CD4-positive, alpha-beta T cell (primary cell): ENCODE measurements at regions of chr9 and their contacts with region 1.

Region 1: GRCh38 chr9:105127863-105128220 is 116.6 kb upstream of the SLC44A1 start:
- DNase-seq: peak; percentile 30 to 92 (median 46)
- ATAC-seq: peak; percentile 99
- H3K4me3 ChIP-seq: peak overlapping the region; percentile 3
- H3K4me3 Mint-ChIP-seq: peak overlapping the region; percentile 31
- H3K27ac ChIP-seq: no peak overlapping the region
- H3K27ac Mint-ChIP-seq: peak overlapping the region; percentile 73
- H3K4me1 ChIP-seq: peaks cover 55% of the 10 kb centered on the region
- H3K4me1 Mint-ChIP-seq: peaks cover 65% of the 10 kb centered on the region
- H3K27me3 ChIP-seq: no peaks in the 10 kb centered on the region
- H3K27me3 Mint-ChIP-seq: no peaks in the 10 kb centered on the region
- CTCF ChIP-seq: no peak

Region 2: GRCh38 chr9:104961238-104961637 is 166.6 kb before region 1 on chr9:
- CTCF ChIA-PET with region 1: no interaction called
- POLR2A ChIA-PET with region 1: interaction called, 4 read pairs
- intact Hi-C with region 1: loop called in 1 of 2 experiments (anchors 2 kb)
- DNase-seq: peak in 12 of 14 experiments; percentile 9 to 79 (median 42)
- ATAC-seq: peak; percentile 99
- H3K4me3 ChIP-seq: no peak overlapping the region
- H3K4me3 Mint-ChIP-seq: peak overlapping the region; percentile 6
- H3K27ac ChIP-seq: no peak overlapping the region
- H3K27ac Mint-ChIP-seq: peak overlapping the region; percentile 10
- H3K4me1 ChIP-seq: peaks cover 14% of the 10 kb centered on the region
- H3K4me1 Mint-ChIP-seq: peaks cover 32% of the 10 kb centered on the region
- H3K27me3 ChIP-seq: no peaks in the 10 kb centered on the region
- H3K27me3 Mint-ChIP-seq: no peaks in the 10 kb centered on the region
- CTCF ChIP-seq: no peak

Region 3: DNA sequence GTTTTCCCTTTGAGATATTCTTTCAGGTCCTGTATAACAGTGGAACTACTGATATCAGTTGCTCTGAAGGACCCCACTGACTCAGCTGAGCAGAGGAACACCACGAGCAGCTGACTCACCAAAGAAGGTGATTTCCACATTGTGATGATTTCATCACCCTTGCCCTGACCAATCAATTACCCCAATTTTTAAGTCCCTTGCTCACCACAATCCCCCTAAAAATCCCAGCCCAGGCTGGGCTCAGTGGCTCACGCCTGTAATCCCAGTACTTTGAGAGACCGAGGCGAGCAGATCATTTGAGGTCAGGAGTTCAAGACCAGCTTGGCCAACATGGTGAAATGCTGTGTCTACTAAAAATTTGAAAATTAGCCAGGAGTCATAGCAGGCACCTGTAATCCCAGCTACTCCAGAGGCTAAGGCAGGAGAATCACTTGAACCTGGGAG is 74.6 kb before region 1 on chr9:
- CTCF ChIA-PET with region 1: no interaction called
- POLR2A ChIA-PET with region 1: no interaction called
- intact Hi-C with region 1: loop called in 1 of 2 experiments (anchors 5 kb)
- DNase-seq: peak in 2 of 14 experiments; percentile 72 to 78
- ATAC-seq: peak; percentile 26
- H3K4me3 ChIP-seq: no peak overlapping the region
- H3K4me3 Mint-ChIP-seq: no peak overlapping the region
- H3K27ac ChIP-seq: no peak overlapping the region
- H3K27ac Mint-ChIP-seq: peak overlapping the region; percentile 8
- H3K4me1 ChIP-seq: peaks cover 17% of the 10 kb centered on the region
- H3K4me1 Mint-ChIP-seq: peaks cover 38% of the 10 kb centered on the region
- H3K27me3 ChIP-seq: no peaks in the 10 kb centered on the region
- H3K27me3 Mint-ChIP-seq: no peaks in the 10 kb centered on the region
- CTCF ChIP-seq: no peak

Region 4: GRCh38 chr9:105157130-105157583 is 29.3 kb after region 1 on chr9:
- CTCF ChIA-PET with region 1: interaction called, 3 read pairs
- POLR2A ChIA-PET with region 1: interaction called, 3 read pairs
- intact Hi-C with region 1: loop called in 1 of 2 experiments (anchors 2 kb)
- DNase-seq: peak in 8 of 14 experiments; percentile 1 to 68 (median 30)
- ATAC-seq: peak; percentile 80
- H3K4me3 ChIP-seq: no peak overlapping the region
- H3K4me3 Mint-ChIP-seq: no peak overlapping the region
- H3K27ac ChIP-seq: no peak overlapping the region
- H3K27ac Mint-ChIP-seq: no peak overlapping the region
- H3K4me1 ChIP-seq: peaks cover 12% of the 10 kb centered on the region
- H3K4me1 Mint-ChIP-seq: peaks cover 34% of the 10 kb centered on the region
- H3K27me3 ChIP-seq: no peaks in the 10 kb centered on the region
- H3K27me3 Mint-ChIP-seq: no peaks in the 10 kb centered on the region
- CTCF ChIP-seq: peak; percentile 72